Dendritic cell treated with granulocyte-macrophage colony-stimulating factor and Interleukin-4, amounts not matched to agents 40 ng/mL and 50 ng/mL, for 4 days (primary cell): ENCODE measurements at regions of chr2 and their contacts with region 1.

Region 1: GRCh38 chr2:157468931-157469708 is 25.2 kb upstream of the CYTIP start:
- H3K4me3 Mint-ChIP-seq: peak overlapping the region; percentile 59
- H3K27ac Mint-ChIP-seq: peak overlapping the region; percentile 96
- H3K4me1 Mint-ChIP-seq: peaks cover 37% of the 10 kb centered on the region
- H3K27me3 Mint-ChIP-seq: no peaks in the 10 kb centered on the region

Region 2: GRCh38 chr2:157420771-157421323 is 48.3 kb before region 1 on chr2:
- intact Hi-C with region 1: loop called (anchors 1 kb)
- H3K4me3 Mint-ChIP-seq: peak overlapping the region; percentile 26
- H3K27ac Mint-ChIP-seq: peak overlapping the region; percentile 94
- H3K4me1 Mint-ChIP-seq: peaks cover 43% of the 10 kb centered on the region
- H3K27me3 Mint-ChIP-seq: no peaks in the 10 kb centered on the region